Ascending aorta (tissue), 2 donors: ENCODE measurements at regions of chr3 and their contacts with region 1.

Region 1: DNA sequence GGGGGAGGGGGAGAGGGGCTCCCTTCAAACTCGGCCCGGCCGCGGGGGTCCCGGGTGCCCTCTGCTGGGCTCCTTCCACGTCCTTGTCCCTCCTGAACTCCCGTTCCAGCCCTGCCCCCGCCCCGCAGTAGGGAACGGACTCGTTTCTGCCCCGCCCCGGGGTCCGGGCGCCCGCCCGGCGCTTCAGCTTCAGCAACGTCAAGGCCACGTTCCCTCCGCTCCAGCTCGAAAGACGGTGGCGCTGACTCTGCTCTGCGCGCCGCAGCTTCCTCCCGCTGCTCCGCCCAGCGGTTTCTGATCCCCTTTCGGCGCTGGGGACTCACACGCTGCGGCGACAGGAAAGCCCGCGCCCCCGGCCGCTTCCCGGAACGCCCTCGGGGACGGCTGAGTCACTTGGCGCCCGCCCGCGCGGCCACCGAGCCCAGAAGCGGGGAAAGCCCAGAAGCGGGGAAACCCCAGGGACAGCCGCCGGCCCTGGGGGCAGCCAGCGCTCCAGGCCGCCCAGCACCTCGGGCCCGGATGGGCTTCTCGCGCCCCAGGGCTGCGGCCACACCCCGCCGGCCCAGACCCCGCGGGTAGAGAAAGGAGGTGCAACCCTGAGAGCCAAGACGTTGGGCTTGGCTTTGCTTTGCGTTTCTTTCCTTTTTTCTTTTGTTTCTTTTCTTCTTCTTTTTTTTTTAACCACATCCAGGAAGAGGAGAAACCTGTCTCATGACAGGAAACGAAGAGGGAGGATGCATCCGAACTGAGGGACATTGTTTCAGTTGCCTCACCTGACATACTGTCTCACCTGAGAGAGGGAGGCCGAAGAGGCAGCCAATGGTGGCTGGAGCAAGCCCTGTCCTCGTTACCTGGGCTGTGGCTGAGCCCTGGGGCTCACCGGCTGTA is 28.9 kb downstream of the ARHGAP31 start:
- DNase-seq: peak; percentile 62 to 94
- H3K4me3 ChIP-seq: peak overlapping the region; percentile 67 to 83
- H3K27ac ChIP-seq: peak overlapping the region; percentile 97 to 99
- H3K4me1 ChIP-seq: peaks cover 0 to 5% of the 10 kb centered on the region in 2 donors
- H3K27me3 ChIP-seq: no peaks in the 10 kb centered on the region
- CTCF ChIP-seq: peak in 2 of 3 experiments; percentile 5 to 35

Region 2: GRCh38 chr3:119279101-119279554 is 44.0 kb before region 1 on chr3:
- intact Hi-C with region 1: loop called (anchors 10 kb)
- DNase-seq: no peak
- H3K4me3 ChIP-seq: no peak overlapping the region
- H3K27ac ChIP-seq: peak overlapping the region; percentile 62 to 66
- H3K4me1 ChIP-seq: peaks cover 0 to 2% of the 10 kb centered on the region in 2 donors
- H3K27me3 ChIP-seq: no peaks in the 10 kb centered on the region
- CTCF ChIP-seq: no peak

Region 3: DNA sequence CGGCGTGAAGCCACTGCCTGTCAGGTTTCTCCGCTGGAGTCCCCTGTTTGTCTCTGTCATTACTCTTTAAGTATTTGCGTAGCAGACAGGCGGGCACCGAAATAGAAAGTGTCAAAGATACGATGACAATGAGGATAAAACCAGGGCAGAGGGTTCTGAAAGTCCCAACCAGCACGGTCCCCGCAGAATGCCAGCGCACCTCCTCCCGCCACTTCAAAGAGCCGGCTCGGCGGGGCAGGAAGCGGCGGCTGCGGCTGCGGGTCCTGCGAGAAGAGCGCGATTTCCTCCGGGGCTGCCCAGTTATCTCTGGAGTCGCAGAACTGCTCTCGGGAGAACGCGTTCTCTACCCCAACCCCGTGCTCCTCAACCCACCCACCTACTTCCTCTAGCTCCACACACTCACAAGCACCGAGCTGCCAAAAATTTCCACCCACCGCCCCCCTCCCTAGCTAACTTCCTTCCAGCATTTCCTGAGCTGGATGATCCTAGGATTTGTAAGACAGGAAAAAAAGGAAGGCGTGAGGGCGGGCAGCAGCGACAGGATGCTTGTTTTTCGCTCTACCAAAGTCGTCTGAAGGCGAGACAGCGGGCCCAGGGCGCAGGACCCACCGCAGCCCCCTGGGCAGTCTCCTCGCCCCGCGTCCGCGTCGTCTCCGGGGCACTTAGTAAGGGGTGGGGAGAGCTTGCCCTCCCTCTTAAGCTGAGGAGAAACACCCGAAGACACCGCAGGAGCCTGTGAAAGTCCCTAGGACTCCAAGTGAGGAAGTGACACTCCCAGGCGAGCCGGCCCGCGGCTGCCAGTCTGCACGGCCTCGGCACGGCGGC is 29.0 kb before region 1 on chr3 and contains the start of gene ARHGAP31:
- intact Hi-C with region 1: loop called (anchors 1 kb)
- DNase-seq: peak in 1 of 2 donors; percentile 83
- H3K4me3 ChIP-seq: peak within 1 kb of the TSS; percentile 78 to 80
- H3K27ac ChIP-seq: peak within 1 kb of the TSS; percentile 94 to 96
- H3K4me1 ChIP-seq: peaks cover 6 to 18% of the 10 kb centered on the region in 2 donors
- H3K27me3 ChIP-seq: no peaks in the 10 kb centered on the region
- CTCF ChIP-seq: no peak
- total RNA-seq, gene ARHGAP31: 31.4 TPM